MCF 10A (cell line): ENCODE measurements at regions of chr1 and their contacts with region 1.

Region 1: GRCh38 chr1:211578640-211579433 is at the start of gene SLC30A1:
- DNase-seq: peak; percentile 100
- H3K4me3 Mint-ChIP-seq: peak within 1 kb of the TSS; percentile 89
- H3K27ac Mint-ChIP-seq: peak within 1 kb of the TSS; percentile 96
- H3K4me1 Mint-ChIP-seq: peaks cover 48% of the 10 kb centered on the region
- H3K27me3 Mint-ChIP-seq: no peaks in the 10 kb centered on the region
- CTCF ChIP-seq: no peak
- total RNA-seq, gene SLC30A1: 87.0 and 94.1 TPM in 2 replicates

Region 2: GRCh38 chr1:211258756-211259637 is 319.8 kb before region 1 on chr1 and contains the start of gene RCOR3:
- CTCF ChIA-PET with region 1: no interaction called
- POLR2A ChIA-PET with region 1: interaction called, 10 read pairs
- intact Hi-C with region 1: no loop called
- DNase-seq: peak; percentile 96
- H3K4me3 Mint-ChIP-seq: peak within 1 kb of the TSS; percentile 88
- H3K27ac Mint-ChIP-seq: peak within 1 kb of the TSS; percentile 96
- H3K4me1 Mint-ChIP-seq: peaks cover 24% of the 10 kb centered on the region
- H3K27me3 Mint-ChIP-seq: no peaks in the 10 kb centered on the region
- CTCF ChIP-seq: peak; percentile 93
- total RNA-seq, gene RCOR3: 70.1 and 70.3 TPM in 2 replicates

Region 3: GRCh38 chr1:211393203-211393602 is 185.6 kb before region 1 on chr1:
- CTCF ChIA-PET with region 1: no interaction called
- POLR2A ChIA-PET with region 1: no interaction called
- intact Hi-C with region 1: no loop called
- DNase-seq: no peak
- H3K4me3 Mint-ChIP-seq: no peak overlapping the region
- H3K27ac Mint-ChIP-seq: no peak overlapping the region
- H3K4me1 Mint-ChIP-seq: no peaks in the 10 kb centered on the region
- H3K27me3 Mint-ChIP-seq: no peaks in the 10 kb centered on the region
- CTCF ChIP-seq: no peak

Region 4: DNA sequence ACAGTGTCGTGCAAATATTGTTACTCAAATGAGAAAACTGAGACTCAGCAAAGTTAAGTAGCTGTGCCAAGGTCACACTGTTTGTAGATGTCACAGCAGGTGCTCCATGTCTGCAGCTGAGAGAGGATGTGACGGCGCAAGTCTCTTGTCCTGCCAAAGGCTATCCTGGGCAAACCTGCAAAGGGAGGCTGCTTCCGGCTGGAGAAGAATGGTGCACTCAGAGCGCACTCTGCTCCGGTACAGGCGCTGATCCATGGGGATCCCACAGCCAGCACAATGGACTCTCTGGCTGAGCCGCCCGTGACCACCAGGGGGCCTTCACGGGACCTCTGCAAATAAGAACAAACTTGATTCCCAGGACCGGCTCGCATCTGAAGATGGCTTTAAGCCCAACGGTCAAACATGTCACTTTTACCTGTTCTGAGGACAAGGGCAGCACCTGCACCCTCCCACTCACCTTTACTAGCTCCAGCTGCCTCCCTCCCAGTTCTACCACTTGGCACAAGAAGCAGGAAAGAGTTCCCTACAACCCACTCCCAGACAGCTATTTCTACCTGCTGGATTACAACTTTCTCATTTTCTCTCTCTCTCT is 108.8 kb before region 1 on chr1:
- CTCF ChIA-PET with region 1: interaction called, 4 read pairs
- POLR2A ChIA-PET with region 1: interaction called, 4 read pairs
- intact Hi-C with region 1: loop called (anchors 1 kb)
- DNase-seq: peak; percentile 92
- H3K4me3 Mint-ChIP-seq: no peak overlapping the region
- H3K27ac Mint-ChIP-seq: no peak overlapping the region
- H3K4me1 Mint-ChIP-seq: peaks cover 15% of the 10 kb centered on the region
- H3K27me3 Mint-ChIP-seq: no peaks in the 10 kb centered on the region
- CTCF ChIP-seq: peak; percentile 98

Region 5: GRCh38 chr1:211589782-211590721 is 11.2 kb after region 1 on chr1:
- CTCF ChIA-PET with region 1: interaction called, 10 read pairs
- POLR2A ChIA-PET with region 1: interaction called, 42 read pairs
- intact Hi-C with region 1: loop called (anchors 1 kb)
- DNase-seq: peak; percentile 95
- H3K4me3 Mint-ChIP-seq: no peak overlapping the region
- H3K27ac Mint-ChIP-seq: peak overlapping the region; percentile 65
- H3K4me1 Mint-ChIP-seq: peaks cover 30% of the 10 kb centered on the region
- H3K27me3 Mint-ChIP-seq: no peaks in the 10 kb centered on the region
- CTCF ChIP-seq: no peak

Region 6: DNA sequence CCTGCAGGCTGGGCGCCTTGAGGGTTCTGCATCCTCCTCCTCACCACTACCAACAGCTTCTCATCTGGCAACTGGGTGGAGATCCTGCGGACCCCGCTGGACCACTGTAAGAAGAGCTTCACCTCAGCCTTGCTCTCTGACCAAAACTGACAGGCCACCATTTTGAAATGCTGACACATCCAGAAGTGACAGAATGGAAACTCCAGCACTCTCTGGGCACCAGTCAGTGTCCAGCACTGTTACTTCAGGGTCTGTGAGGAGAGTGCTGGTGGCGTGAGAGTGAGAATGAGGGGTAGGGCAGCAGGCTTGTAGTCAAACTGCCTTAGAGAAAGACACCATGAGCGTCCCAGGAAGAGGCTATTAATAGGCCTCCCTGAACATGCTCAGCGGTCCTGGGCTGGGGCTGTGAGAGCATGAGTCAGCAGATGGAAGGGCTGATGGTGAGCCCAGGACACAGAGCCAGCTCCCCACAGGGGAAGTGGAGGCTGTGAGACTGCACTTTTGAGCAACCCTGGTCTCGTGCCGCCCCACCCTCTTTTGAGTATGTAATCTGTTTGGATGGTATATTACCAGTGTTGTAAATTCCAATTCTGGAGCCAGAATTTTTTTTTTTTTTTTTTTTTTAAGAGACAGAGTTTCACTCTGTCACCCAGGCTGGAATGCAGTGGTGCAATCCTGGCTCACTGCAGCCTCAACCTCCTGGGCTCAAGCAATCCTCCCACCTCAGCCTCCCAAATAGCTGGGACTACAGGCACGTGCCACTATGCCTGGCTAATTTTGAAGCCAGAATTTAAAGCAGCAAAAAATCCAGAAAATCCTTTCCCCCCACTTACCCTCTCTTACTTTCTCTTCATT is 34.5 kb after region 1 on chr1:
- CTCF ChIA-PET with region 1: interaction called, 7 read pairs
- POLR2A ChIA-PET with region 1: interaction called, 28 read pairs
- intact Hi-C with region 1: loop called (anchors 1 kb)
- DNase-seq: peak; percentile 100
- H3K4me3 Mint-ChIP-seq: peak overlapping the region; percentile 33
- H3K27ac Mint-ChIP-seq: peak overlapping the region; percentile 61
- H3K4me1 Mint-ChIP-seq: peaks cover 37% of the 10 kb centered on the region
- H3K27me3 Mint-ChIP-seq: no peaks in the 10 kb centered on the region
- CTCF ChIP-seq: no peak

Region 7: DNA sequence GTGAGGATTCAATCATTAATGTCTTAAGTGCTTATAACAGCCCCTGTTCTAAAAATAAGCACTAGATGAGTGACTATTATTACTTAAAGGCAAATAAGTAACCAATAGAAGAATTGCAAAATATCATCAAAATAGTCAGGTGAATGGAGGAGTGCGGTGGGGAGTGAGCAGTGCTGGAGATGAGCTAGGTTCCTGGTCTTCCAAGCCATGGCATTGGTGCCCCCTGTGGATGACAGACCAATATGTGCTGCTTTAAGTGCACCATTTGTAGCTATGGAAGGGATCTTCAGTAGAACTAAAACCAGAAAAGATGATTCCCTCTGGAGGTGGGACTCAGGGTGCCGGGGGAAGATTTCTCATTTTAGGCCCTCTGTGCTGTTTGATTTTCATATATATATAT is 46.2 kb after region 1 on chr1:
- CTCF ChIA-PET with region 1: interaction called, 3 read pairs
- POLR2A ChIA-PET with region 1: interaction called, 18 read pairs
- intact Hi-C with region 1: loop called (anchors 1 kb)
- DNase-seq: peak; percentile 86
- H3K4me3 Mint-ChIP-seq: no peak overlapping the region
- H3K27ac Mint-ChIP-seq: no peak overlapping the region
- H3K4me1 Mint-ChIP-seq: no peaks in the 10 kb centered on the region
- H3K27me3 Mint-ChIP-seq: no peaks in the 10 kb centered on the region
- CTCF ChIP-seq: peak; percentile 43

Region 8: GRCh38 chr1:211643324-211644212 is 64.7 kb after region 1 on chr1:
- CTCF ChIA-PET with region 1: interaction called, 11 read pairs
- POLR2A ChIA-PET with region 1: interaction called, 423 read pairs
- intact Hi-C with region 1: loop called (anchors 1 kb)
- DNase-seq: peak; percentile 97
- H3K4me3 Mint-ChIP-seq: peak overlapping the region; percentile 45
- H3K27ac Mint-ChIP-seq: peak overlapping the region; percentile 88
- H3K4me1 Mint-ChIP-seq: peaks cover 56% of the 10 kb centered on the region
- H3K27me3 Mint-ChIP-seq: no peaks in the 10 kb centered on the region
- CTCF ChIP-seq: no peak